HEK293T (cell line): ENCODE measurements at regions of chr4 and their contacts with region 1.

Region 1: DNA sequence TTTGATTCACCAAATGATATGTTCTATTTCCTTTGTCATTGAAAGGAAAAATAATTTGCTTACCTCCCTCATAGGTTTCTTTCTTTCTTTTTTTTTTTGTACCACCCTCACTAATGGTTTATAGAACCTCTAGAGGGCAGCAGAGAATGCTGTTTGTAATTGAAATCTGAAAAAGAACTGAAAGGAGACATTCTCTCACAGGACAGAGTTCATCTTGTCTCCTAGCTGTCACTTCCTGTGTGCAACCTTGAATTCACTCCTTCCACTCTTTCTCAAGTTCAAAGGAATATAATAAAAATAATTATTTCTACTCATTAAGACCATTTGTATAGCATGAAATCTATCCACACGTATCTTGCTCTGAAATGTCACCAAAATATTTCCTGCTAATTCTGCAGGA is 51.0 kb downstream of the GUCY1B1 start:
- DNase-seq: peak; percentile 58

Region 2: DNA sequence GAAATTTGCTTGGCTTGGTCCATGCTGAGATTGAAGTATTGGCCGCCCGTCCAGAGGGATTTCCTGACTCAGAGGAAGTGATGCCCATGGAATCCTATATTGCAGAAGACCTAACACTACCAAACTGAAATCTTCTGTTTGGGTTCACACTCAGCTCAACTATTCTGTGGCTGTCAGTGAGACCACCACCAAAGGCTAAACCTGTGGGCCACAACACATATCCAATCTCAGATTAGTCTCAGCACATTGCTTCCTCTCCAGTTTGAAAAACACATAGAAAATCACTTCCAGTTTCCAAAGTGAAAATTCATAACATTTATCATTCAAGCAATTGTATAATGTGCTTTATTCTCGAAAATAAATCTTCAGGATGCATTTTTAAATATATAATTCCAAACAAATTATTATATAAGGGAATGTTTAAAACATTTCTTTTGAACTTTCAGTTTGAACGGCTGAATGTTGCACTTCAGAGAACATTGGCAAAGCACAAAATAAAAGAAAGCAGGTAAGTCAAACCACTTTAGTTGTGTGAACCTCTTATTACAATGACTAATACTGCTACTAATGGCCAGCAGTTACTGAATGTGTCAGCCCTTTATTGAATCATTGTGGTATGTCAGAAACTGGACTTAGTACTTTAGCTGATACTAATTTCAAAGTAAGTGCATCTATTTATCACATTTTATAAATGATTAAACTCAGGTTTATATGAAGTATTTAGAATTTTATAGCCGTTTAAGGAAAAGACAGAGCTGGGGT is 106.2 kb before region 1 on chr4:
- CTCF ChIA-PET with region 1: no interaction called
- POLR2A ChIA-PET with region 1: no interaction called
- DNase-seq: no peak

Region 3: GRCh38 chr4:155953151-155954114 is 143.6 kb after region 1 on chr4 and contains the start of gene CTSO:
- CTCF ChIA-PET with region 1: interaction called, 40 read pairs
- POLR2A ChIA-PET with region 1: interaction called, 14 read pairs
- DNase-seq: peak; percentile 67